ENCODE measurements at regions of chr1 and their contacts with region 1.

Region 1: GRCh38 chr1:45686317-45687013 is at the start of gene GPBP1L1:
- DNase-seq: peak; percentile 99
- H3K4me3 Mint-ChIP-seq: peak within 1 kb of the TSS; percentile 98
- H3K27ac Mint-ChIP-seq: peak within 1 kb of the TSS; percentile 100
- H3K4me1 Mint-ChIP-seq: peaks cover 50% of the 10 kb centered on the region
- H3K27me3 Mint-ChIP-seq: no peaks in the 10 kb centered on the region
- total RNA-seq, gene GPBP1L1: 113 to 122 TPM

Region 2: DNA sequence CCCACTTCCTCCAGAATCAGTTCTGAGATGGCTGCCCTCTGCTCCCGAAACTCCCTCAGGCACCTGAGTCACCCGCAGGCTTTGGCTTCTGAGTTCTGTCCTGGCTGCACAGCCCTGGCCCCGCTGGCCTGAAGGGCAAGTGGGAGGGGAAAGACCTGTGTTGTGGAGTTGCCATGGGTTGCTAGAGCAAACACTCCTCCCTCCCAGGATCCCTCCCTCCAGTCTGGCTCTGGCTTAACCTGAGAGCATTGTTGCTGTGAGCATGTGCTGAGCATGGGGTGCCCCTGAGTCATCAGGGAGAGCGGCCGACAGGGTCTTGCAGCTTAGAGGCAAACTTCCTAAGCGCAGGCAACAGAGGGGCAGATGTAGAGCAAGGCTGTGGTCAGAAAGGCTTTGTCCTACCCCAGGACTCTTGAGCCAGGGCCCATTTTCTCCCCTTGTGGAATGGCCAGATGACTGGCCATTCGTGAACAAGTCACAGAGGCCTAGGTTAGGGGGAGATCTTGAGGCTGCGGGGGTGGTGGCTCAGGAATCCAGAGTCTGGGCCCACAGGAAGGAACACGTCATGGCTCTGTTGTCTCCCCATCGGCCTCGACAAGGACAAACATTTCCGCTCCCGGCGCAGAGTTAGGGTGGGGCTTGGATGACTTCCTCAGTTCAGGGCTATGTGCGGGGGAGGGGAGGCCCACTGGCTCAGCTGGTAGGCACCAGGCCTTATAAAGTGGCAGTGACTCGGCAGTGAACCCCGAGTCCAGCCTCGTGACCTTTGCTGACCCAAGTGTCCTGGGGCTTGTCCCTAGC is 879.0 kb before region 1 on chr1 and contains the start of gene DYNLT4:
- CTCF ChIA-PET with region 1: no interaction called
- intact Hi-C with region 1: loop called (anchors 2 kb)
- DNase-seq: peak; percentile 97
- H3K4me3 Mint-ChIP-seq: peak within 1 kb of the TSS; percentile 76
- H3K27ac Mint-ChIP-seq: peak within 1 kb of the TSS; percentile 100
- H3K4me1 Mint-ChIP-seq: peaks cover 93% of the 10 kb centered on the region
- H3K27me3 Mint-ChIP-seq: no peaks in the 10 kb centered on the region
- total RNA-seq, gene DYNLT4: 0.62 to 0.67 TPM

Region 3: DNA sequence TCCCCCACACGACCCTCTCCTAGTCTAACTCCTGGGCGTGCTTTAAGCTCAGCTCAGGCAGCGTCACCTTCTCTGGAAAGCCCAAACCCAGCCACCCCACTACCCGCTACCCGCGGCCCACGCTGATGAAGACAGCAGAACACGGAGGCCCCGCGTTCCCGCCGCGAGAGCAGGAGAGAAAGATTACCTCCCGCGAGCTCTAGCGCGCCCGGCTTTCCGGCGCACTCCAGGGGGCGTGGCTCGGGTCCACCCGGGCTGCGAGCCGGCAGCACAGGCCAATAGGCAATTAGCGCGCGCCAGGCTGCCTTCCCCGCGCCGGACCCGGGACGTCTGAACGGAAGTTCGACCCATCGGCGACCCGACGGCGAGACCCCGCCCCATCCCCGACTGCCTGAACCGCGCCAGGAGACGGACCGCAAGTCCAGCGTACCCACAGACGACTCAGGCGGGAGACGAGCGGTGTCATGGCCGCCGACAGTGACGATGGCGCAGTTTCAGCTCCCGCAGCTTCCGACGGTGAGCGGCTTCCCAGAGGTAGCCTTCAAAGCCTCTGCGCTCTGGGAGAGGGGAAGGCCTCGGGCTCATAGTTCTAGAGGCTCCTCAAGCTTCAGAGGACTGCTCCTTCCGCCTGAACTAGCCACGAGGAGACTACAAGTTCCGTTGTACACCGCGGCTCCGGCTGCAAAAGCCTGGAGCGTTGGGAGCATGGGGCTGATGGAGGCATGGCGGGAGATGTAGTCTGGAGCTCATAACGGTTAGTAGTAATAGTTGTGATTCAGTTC is 346.5 kb before region 1 on chr1 and contains the starts of genes MUTYH and TOE1:
- CTCF ChIA-PET with region 1: no interaction called
- intact Hi-C with region 1: loop called (anchors 1 kb)
- DNase-seq: peak; percentile 95
- H3K4me3 Mint-ChIP-seq: peak within 1 kb of the TSS; percentile 100
- H3K27ac Mint-ChIP-seq: peak within 1 kb of the TSS; percentile 100
- H3K4me1 Mint-ChIP-seq: peaks cover 35% of the 10 kb centered on the region
- H3K27me3 Mint-ChIP-seq: no peaks in the 10 kb centered on the region
- total RNA-seq, gene MUTYH: 42.0 to 45.0 TPM
- total RNA-seq, gene TOE1: 23.0 to 23.8 TPM

Region 4: GRCh38 chr1:45550401-45551351 is 135.8 kb before region 1 on chr1 and contains the start of gene AKR1A1:
- CTCF ChIA-PET with region 1: interaction called, 4 read pairs
- intact Hi-C with region 1: loop called (anchors 1 kb)
- DNase-seq: peak; percentile 93
- H3K4me3 Mint-ChIP-seq: peak within 1 kb of the TSS; percentile 96
- H3K27ac Mint-ChIP-seq: peak within 1 kb of the TSS; percentile 94
- H3K4me1 Mint-ChIP-seq: peaks cover 19% of the 10 kb centered on the region
- H3K27me3 Mint-ChIP-seq: no peaks in the 10 kb centered on the region
- total RNA-seq, gene AKR1A1: 207 to 217 TPM

Region 5: DNA sequence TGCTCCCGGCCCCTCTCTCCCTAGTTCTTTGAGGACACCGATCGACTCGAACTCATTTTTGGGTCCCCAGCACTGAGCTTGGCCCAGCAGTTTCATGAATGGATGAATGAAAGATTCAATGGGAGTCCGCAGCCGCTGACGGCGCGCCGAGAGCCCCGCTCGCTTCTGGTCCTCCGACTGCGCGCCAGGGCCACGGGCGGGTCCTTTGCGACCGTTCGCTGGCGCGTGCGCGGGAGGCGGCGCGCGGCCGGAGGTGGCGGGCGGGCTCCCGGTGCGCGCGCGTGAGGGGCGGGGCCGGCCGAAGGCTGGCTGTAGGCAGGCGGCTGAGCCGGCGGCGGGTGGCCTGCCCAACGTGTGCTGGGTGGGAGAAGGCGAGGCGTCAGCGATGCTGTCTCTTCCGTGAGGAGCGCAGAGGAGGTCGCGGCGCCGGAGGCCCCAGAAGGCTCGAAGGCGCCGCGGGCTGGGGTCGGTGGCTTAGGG is 116.9 kb after region 1 on chr1 and contains the start of gene MAST2:
- CTCF ChIA-PET with region 1: no interaction called
- intact Hi-C with region 1: loop called (anchors 1 kb)
- DNase-seq: peak; percentile 84
- H3K4me3 Mint-ChIP-seq: peak within 1 kb of the TSS; percentile 86
- H3K27ac Mint-ChIP-seq: peak within 1 kb of the TSS; percentile 74
- H3K4me1 Mint-ChIP-seq: peaks cover 27% of the 10 kb centered on the region
- H3K27me3 Mint-ChIP-seq: no peaks in the 10 kb centered on the region
- total RNA-seq, gene MAST2: 21.7 to 22.1 TPM

Region 6: GRCh38 chr1:46303038-46303871 is 616.8 kb after region 1 on chr1 and contains the starts of genes LRRC41 and UQCRH:
- CTCF ChIA-PET with region 1: no interaction called
- intact Hi-C with region 1: loop called (anchors 1 kb)
- DNase-seq: peak; percentile 93
- H3K4me3 Mint-ChIP-seq: peak within 1 kb of the TSS; percentile 98
- H3K27ac Mint-ChIP-seq: peak within 1 kb of the TSS; percentile 94
- H3K4me1 Mint-ChIP-seq: peaks cover 45% of the 10 kb centered on the region
- H3K27me3 Mint-ChIP-seq: no peaks in the 10 kb centered on the region
- total RNA-seq, gene LRRC41: 28.0 to 29.8 TPM
- total RNA-seq, gene UQCRH: 403 to 409 TPM